HepG2 (cell line): ENCODE measurements at regions of chr6 and their contacts with region 1.

Region 1: DNA sequence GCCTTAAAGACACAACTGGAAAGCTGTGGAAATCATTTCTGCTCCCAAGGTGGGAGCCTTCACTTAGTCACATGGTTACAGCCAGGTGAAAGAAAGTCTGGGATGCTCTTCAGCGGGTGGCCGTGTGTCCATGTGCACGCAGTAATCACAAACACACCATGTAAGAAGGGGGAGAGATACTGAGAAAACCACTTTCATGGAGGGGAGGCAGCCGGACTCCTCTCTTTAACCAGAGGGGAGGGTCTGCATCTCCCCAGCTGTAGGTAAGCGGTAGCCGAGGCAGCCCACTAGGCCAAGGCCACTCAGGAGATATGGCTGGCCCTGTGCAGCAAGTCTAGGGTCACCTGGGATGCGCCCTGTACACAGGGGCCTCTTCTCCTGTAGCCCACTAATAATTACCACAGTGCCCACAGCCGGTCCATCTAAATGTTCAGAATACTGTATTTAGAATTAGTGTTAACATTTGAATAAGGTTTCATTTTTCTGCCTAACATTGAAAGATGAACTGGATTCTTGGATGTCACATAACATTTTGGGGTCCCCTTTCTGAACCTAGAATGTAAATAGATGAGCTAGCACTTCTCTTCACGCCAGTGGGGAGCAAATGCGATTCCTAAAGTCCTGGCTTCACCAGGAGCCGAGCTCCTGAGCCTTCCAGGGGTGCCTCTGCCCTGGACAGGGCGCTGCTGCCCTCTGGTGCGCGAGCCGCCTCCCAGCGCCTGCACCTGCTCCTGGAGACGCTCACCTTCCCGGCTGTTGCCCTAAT is 15.9 kb downstream of the GPR31 start:
- DNase-seq: peak; percentile 58
- ATAC-seq: peak; percentile 88
- H3K4me3 ChIP-seq: peak overlapping the region in 1 of 3 experiments; percentile 41; a peak in 2 of 6 replicates
- H3K27ac ChIP-seq: no peak overlapping the region
- H3K4me1 ChIP-seq: peaks cover 37% of the 10 kb centered on the region
- H3K27me3 ChIP-seq: peaks cover 8 to 41% of the 10 kb centered on the region in 2 experiments; a peak in 4 of 5 replicates
- CTCF ChIP-seq: peak; percentile 99
- EP300 ChIP-seq: no peak
- POLR2A ChIP-seq: no peak
- RAD21 ChIP-seq: peak; percentile 99

Region 2: GRCh38 chr6:166786704-166787293 is 355.1 kb before region 1 on chr6:
- CTCF ChIA-PET with region 1: interaction called, 13 read pairs
- POLR2A ChIA-PET with region 1: no interaction called
- in situ Hi-C with region 1: no loop called
- intact Hi-C with region 1: loop called (anchors 1 kb)
- DNase-seq: peak; percentile 81
- ATAC-seq: peak; percentile 74
- H3K4me3 ChIP-seq: no peak overlapping the region
- H3K27ac ChIP-seq: no peak overlapping the region
- H3K4me1 ChIP-seq: no peaks in the 10 kb centered on the region
- H3K27me3 ChIP-seq: no peaks in the 10 kb centered on the region
- CTCF ChIP-seq: peak; percentile 74
- EP300 ChIP-seq: no peak
- POLR2A ChIP-seq: no peak
- RAD21 ChIP-seq: peak; percentile 52; the same call in 1 of the 2 replicates

Region 3: GRCh38 chr6:166999145-166999883 is 142.5 kb before region 1 on chr6 and contains the start of gene CEP43:
- CTCF ChIA-PET with region 1: interaction called, 24 read pairs
- POLR2A ChIA-PET with region 1: interaction called, 18 read pairs
- in situ Hi-C with region 1: loop called (anchors 25 kb)
- intact Hi-C with region 1: loop called (anchors 1 kb)
- DNase-seq: peak; percentile 95
- ATAC-seq: peak; percentile 92
- H3K4me3 ChIP-seq: peak within 1 kb of the TSS; percentile 91 to 99 (median 97)
- H3K27ac ChIP-seq: peak within 1 kb of the TSS; percentile 82
- H3K4me1 ChIP-seq: peaks cover 54% of the 10 kb centered on the region
- H3K27me3 ChIP-seq: no peaks in the 10 kb centered on the region; a peak in 1 of 5 replicates
- CTCF ChIP-seq: peak; percentile 6; the same call in 1 of the 2 replicates
- EP300 ChIP-seq: peak in 1 of 2 experiments; percentile 25; a peak in 1 of 4 replicates
- POLR2A ChIP-seq: peak; percentile 79 to 83; a peak in 3 of 4 replicates
- RAD21 ChIP-seq: peak; percentile 59
- total RNA-seq, gene CEP43: 73.9 and 88.4 TPM in 2 replicates

Region 4: DNA sequence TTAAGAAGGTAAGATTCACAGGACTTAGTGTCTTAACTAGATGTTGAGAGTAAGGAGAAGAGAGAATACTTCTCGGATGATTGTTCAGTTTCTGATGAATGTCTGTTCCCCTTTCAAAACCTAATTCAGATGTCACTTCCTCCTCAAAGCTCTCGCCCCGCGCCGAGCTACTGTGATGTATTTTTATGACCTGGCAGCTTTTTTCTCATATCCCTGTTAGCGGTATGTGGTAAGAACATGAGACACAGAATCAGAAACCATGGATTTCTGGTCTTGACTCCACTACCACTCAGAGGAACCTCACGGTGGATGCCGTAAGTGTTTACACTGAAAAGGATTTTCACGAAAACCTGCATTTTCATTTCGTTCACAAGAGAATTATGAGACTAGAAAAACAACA is 94.3 kb before region 1 on chr6:
- CTCF ChIA-PET with region 1: interaction called, 7 read pairs
- POLR2A ChIA-PET with region 1: no interaction called
- in situ Hi-C with region 1: no loop called
- intact Hi-C with region 1: loop called (anchors 5 kb)
- DNase-seq: no peak
- ATAC-seq: no peak
- H3K4me3 ChIP-seq: no peak overlapping the region
- H3K27ac ChIP-seq: no peak overlapping the region
- H3K4me1 ChIP-seq: peaks cover 11% of the 10 kb centered on the region
- H3K27me3 ChIP-seq: no peaks in the 10 kb centered on the region
- CTCF ChIP-seq: no peak
- EP300 ChIP-seq: no peak
- POLR2A ChIP-seq: no peak
- RAD21 ChIP-seq: no peak

Region 5: DNA sequence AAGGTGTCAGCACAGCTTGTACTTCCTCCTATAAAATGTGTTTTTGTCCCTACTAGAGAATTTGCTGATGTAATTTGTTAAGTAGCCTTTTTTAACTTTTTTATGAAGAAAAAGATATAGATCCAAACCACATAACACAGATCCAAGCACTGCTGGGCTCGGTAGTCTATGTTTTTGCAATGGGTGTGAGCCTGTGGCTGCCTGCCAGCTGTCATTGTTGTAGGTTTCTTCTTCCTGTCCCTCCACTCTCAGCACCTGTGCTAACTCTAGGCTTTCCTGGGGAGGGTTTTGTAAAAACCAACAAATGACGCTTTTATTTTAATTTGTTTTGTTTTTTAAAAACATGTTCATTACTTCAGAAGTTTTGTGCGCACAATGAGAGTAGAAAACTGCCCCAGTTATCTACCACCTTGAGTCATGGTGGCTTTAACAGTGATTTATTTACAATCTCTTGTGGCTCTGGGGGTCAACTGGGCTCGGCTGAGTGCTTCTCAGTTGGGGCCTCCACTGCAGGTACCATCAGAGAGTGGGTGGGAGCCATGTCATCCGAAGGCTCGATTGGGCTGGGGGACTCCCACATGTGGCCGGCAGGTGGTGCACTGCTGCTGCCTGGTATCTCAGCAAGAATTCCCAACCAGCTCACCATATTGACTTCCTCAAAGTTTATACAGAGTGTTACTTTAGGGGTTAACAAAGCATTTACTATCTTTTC is 22.0 kb before region 1 on chr6:
- CTCF ChIA-PET with region 1: interaction called, 28 read pairs
- POLR2A ChIA-PET with region 1: interaction called, 33 read pairs
- in situ Hi-C with region 1: no loop called
- intact Hi-C with region 1: loop called (anchors 1 kb)
- DNase-seq: no peak
- ATAC-seq: no peak
- H3K4me3 ChIP-seq: no peak overlapping the region
- H3K27ac ChIP-seq: no peak overlapping the region
- H3K4me1 ChIP-seq: peaks cover 68% of the 10 kb centered on the region
- H3K27me3 ChIP-seq: peaks cover 0 to 14% of the 10 kb centered on the region in 2 experiments; a peak in 3 of 5 replicates
- CTCF ChIP-seq: peak; percentile 70
- EP300 ChIP-seq: no peak
- POLR2A ChIP-seq: no peak
- RAD21 ChIP-seq: peak; percentile 71